Breast epithelium (tissue), 4 donors: ENCODE measurements at regions of chr13 and their contacts with region 1.

Region 1: DNA sequence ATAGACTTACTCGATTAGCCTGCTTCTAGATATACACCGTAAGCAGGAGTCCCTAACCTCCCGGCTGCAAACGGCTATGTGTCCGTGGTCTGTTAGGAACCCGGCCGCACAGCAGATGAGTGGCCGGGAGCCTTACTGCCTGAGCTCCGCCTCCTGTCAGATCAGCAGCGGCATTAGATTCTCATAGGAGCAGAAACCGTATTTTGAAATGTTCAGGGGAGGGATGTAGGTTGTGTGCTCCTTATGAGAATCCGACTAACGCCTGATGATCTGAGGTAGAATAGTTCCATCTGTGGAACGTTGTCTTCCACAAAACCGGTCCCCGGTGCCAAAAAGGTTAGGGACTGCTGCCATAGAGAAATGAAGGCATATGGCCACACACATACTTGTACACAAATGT is 1491.9 kb downstream of the SLITRK5 start:
- DNase-seq: no peak
- H3K4me3 ChIP-seq: no peak overlapping the region
- H3K27ac ChIP-seq: no peak overlapping the region
- H3K4me1 ChIP-seq: no peaks in the 10 kb centered on the region
- H3K27me3 ChIP-seq: no peaks in the 10 kb centered on the region
- CTCF ChIP-seq: no peak
- POLR2A ChIP-seq: no peak

Region 2: GRCh38 chr13:88601949-88602348 is 561.1 kb before region 1 on chr13:
- intact Hi-C with region 1: loop called (anchors 5 kb)
- DNase-seq: no peak
- H3K4me3 ChIP-seq: no peak overlapping the region
- H3K27ac ChIP-seq: no peak overlapping the region
- H3K4me1 ChIP-seq: no peaks in the 10 kb centered on the region
- H3K27me3 ChIP-seq: no peaks in the 10 kb centered on the region
- CTCF ChIP-seq: no peak
- POLR2A ChIP-seq: no peak

Region 3: GRCh38 chr13:89925107-89925506 is 762.0 kb after region 1 on chr13:
- intact Hi-C with region 1: no loop called
- DNase-seq: no peak
- H3K4me3 ChIP-seq: no peak overlapping the region
- H3K27ac ChIP-seq: no peak overlapping the region
- H3K4me1 ChIP-seq: no peaks in the 10 kb centered on the region
- H3K27me3 ChIP-seq: no peaks in the 10 kb centered on the region
- CTCF ChIP-seq: no peak
- POLR2A ChIP-seq: no peak